Right ventricle myocardium inferior (tissue), 1 donor: ENCODE measurements at regions of chrX and their contacts with region 1.

Region 1: DNA sequence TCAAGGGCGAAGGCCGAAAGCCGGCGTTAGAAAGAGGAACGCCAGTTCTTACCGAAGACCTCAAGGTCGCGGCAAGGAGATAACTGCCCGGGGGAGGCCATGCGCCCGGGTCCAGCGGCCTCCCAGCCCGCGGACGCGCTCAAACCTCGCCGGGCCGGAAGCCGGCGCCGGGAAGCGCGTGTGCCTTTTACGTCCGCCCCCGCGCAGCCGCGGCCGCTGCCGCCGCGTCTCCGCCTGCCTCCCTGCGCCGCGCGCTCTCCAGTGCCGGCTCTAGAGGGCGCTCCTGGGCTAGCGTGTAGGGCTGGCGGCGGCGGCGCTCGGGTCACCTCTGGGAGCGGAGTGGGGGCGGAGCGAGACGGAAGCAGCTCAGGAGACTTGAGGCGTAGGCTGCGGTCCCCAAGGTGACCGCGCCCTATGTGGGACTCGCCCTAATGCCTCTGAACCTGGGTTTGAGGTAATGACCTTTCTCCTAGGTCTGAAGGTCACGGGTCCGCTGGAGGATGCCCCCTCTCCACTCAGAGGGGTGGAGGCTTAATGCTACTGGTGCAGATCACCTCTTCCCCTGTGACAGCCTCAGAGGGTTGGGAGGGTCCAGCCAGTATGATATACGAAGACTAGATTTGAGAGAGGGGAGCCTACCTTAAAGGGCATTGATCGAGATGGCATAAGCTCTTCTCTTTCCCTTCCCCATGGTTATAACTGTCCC is 839 bp downstream of the SLC25A5 start:
- DNase-seq: peak; percentile 95
- ATAC-seq: peak; percentile 92

Region 2: DNA sequence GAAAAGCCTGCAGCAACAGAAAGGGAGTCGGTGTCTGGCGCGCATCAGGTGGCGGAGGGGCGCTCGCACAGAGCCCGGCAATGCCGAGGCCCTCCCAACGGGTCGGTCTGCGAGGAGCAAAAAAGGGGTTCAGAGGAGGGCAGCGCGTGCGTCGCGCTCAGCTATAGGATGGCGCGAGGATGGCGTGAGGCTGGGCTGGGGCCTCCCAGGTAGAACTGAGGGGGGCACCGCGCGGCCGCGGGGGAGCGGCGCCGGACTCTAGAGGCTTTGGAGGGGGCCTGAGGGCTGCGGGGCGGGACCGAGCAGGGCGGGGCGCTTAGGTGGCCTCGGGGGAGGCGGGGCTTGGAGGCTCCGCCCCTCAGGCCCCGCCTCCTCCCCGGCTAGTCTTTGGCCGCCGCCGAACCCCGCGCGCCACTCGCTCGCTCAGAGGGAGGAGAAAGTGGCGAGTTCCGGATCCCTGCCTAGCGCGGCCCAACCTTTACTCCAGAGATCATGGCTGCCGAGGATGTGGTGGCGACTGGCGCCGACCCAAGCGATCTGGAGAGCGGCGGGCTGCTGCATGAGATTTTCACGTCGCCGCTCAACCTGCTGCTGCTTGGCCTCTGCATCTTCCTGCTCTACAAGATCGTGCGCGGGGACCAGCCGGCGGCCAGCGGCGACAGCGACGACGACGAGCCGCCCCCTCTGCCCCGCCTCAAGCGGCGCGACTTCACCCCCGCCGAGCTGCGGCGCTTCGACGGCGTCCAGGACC is 233.0 kb before region 1 on chrX and contains the start of gene PGRMC1:
- intact Hi-C with region 1: loop called (anchors 5 kb)
- DNase-seq: peak; percentile 88
- ATAC-seq: peak; percentile 96
- total RNA-seq, gene PGRMC1: 21.9 TPM

Region 3: DNA sequence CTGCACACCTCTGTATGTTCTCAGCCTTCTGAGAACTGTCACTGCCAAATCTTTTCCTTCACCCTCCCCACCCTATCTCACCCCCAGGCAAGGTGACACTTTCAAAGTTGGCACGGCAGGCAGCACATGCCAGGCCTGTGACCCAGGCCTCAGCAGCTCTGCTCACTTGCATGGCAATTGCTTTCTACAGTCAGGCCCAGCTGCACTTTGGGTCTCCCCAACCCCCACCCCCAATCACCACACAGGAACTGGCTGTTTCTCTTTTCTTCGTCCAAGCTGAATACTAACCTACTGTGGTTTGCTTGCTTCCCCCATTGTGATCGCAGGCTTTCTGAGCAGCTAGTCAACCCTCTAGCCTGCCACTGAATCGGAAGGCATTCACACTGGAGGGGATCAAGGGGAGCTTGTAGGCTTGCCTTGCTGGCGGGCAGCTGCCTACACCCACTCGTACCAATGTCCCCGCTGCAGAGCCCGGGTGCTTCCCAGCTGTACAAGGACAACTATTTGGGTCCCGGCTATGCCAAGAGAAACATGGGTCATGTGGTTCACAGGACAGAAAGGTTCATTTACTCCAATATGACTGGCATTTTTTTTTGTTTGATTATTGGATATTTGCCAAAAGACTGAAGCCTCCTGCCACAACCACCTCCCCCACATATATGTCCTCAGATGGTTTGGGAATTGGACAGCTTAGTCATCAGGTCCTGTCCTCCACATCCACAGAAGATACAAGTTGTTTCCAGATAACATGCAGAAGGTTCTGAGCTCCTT is 41.9 kb before region 1 on chrX:
- intact Hi-C with region 1: loop called (anchors 5 kb)
- DNase-seq: no peak
- ATAC-seq: peak; percentile 88

Region 4: DNA sequence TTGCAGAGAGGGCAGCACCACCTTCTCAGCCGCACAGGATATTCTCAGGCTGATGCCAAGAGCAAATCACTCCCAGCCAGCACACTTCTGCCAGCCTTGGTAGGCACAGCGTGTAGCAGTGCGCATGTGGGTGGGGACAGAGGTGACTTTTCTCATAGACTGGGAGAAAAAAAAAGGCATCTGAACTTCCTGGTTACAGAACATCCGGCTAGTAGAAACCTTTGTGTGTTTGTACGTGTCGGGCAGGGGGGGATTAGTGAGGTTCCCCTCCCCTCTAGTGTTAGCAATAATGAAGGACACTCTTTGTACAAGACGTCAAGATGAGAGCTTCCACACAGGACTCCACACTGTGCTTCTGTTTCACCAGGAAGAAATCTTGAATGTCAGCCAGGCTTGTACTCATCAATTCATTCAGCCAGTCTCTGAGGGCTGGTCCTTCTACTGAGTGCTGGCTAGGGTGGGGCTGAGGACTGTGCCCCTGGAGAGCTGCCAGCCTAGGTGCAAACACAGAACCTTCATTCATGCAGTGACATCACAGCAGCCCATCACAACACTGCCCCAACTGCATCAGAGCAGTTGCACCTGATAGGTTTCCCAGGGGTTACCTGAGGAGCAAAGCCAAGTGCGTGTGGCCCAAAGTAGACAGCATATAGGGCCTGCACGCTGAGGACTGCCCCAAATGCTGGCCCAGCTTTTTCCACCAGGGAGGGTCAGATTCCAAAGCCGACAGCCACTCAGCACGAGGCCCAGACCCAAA is 33.8 kb after region 1 on chrX:
- intact Hi-C with region 1: no loop called
- DNase-seq: no peak
- ATAC-seq: no peak

Region 5: DNA sequence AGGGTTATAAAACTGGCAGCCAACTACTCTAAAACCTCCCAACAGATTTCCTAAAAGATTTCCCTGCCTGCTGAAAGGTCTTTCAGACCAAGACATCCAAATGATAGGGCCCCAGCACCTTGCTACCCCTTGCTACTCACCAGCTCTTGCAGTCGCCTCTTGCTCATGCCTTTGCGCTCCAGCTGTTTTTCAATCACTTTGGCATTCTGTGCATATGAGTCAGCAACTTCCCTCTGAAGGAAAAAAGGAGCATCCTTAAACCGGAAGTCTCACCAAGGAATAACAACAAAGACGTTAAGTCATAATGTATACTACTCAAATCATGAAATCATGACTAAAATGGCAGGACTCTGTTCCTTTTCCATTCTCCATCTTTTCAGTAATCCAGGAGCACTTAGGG is 72.1 kb after region 1 on chrX:
- intact Hi-C with region 1: no loop called
- DNase-seq: no peak
- ATAC-seq: no peak